ENCODE measurements at regions of chr4 and their contacts with region 1.

Region 1: DNA sequence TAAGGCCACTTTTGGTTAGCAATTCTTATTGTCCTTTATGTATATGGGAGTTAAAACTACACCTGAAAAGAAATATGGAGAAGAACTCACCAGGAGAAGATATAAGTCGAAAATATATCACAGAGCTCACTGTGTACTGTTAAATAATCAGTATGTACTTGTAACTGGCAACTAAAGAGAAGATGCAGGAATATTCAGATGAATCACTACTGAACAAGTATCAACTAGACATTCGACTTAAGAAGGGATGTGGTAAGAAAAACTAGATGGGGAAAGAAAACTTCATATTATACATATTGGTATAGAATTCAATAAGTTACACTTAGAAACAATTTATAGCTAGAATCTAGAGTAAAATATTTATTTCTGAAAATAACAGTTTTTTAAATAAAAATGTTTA is 230.0 kb downstream of the CAMK2D start:
- DNase-seq: no peak
- H3K4me3 ChIP-seq: no peak overlapping the region
- H3K27ac ChIP-seq: no peak overlapping the region
- H3K4me1 ChIP-seq: no peaks in the 10 kb centered on the region
- H3K27me3 ChIP-seq: no peaks in the 10 kb centered on the region
- CTCF ChIP-seq: no peak

Region 2: DNA sequence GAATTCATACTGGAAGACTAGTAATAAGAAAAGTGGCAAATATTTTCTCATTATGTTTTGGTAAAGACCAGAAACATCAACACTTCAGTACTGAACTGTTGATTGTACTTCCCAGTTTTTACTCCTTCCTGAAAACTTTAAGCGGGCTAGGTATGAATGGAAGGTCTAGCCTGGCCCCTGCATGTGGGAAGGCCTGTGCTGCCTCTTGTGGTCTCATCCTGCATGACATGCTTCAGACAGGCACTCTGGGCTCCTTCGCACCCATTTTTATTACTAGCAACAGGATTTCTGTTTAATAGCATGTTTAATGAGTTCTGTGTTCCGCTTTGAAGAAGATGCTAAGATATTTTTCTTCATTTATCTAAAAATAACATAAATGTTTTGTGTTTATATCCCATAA is 203.1 kb before region 1 on chr4:
- CTCF ChIA-PET with region 1: no interaction called
- POLR2A ChIA-PET with region 1: no interaction called
- intact Hi-C with region 1: no loop called
- DNase-seq: no peak
- H3K4me3 ChIP-seq: no peak overlapping the region
- H3K27ac ChIP-seq: no peak overlapping the region
- H3K4me1 ChIP-seq: no peaks in the 10 kb centered on the region
- H3K27me3 ChIP-seq: no peaks in the 10 kb centered on the region
- CTCF ChIP-seq: peak; percentile 43; the same call in 1 of the 2 replicates

Region 3: DNA sequence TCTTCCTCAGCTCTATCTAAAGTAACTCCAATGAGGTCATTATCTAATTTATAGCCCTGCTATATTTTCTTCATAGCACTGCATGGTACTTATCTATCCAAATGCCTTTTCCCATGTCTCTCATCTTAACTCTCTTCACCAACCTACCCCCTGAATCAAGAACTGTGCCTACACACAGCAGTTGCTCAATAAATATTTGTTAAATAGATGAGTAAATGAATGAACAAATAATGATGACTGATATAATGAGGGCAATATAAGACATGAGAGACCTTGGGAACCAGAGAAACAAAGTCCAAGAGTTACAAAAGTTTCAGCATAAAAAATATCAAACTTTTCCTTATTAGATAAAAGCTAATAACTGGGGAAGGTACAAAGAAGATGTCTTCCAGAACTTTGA is 210.4 kb after region 1 on chr4:
- CTCF ChIA-PET with region 1: no interaction called
- POLR2A ChIA-PET with region 1: interaction called, 10 read pairs
- intact Hi-C with region 1: no loop called
- DNase-seq: no peak
- H3K4me3 ChIP-seq: no peak overlapping the region
- H3K27ac ChIP-seq: no peak overlapping the region
- H3K4me1 ChIP-seq: no peaks in the 10 kb centered on the region
- H3K27me3 ChIP-seq: no peaks in the 10 kb centered on the region
- CTCF ChIP-seq: no peak